ENCODE measurements at regions of chr16 and their contacts with region 1.

Region 1: DNA sequence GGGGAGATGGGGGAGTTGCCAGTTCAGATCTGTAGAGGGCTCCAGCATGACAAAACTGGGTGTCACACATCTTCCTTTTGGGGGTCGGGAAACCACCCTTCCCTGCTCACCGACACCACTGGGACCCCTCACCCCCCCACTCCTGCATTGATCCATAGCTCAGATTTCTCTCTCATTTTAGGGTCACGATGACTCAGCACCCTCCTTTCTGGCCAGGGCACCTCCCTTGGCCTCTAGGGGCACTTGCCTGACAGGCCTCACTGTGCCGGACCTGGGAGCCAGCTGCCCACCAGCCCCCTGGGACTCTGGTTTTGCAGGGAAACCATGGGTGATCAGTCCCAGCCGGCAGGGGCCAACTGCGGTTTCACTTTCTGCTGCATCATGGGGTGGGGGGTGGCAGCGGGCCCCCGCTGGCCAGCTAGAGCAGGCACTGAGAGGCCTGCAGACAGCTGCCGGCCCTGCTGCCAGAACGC is 239.4 kb downstream of the MRTFB start:
- DNase-seq: no peak
- ATAC-seq: no peak; the same call in 1 of the 2 replicates
- H3K4me3 ChIP-seq: peak overlapping the region in 1 of 2 experiments; percentile 37; a peak in 1 of 4 replicates
- H3K27ac ChIP-seq: peak overlapping the region; percentile 74
- H3K4me1 ChIP-seq: peaks cover 47 to 58% of the 10 kb centered on the region in 2 experiments
- H3K27me3 ChIP-seq: no peaks in the 10 kb centered on the region
- CTCF ChIP-seq: peak in 2 of 3 experiments; percentile 10 to 15; a peak in 1 of 6 replicates
- POLR2A ChIP-seq: no peak
- RAD21 ChIP-seq: no peak

Region 2: DNA sequence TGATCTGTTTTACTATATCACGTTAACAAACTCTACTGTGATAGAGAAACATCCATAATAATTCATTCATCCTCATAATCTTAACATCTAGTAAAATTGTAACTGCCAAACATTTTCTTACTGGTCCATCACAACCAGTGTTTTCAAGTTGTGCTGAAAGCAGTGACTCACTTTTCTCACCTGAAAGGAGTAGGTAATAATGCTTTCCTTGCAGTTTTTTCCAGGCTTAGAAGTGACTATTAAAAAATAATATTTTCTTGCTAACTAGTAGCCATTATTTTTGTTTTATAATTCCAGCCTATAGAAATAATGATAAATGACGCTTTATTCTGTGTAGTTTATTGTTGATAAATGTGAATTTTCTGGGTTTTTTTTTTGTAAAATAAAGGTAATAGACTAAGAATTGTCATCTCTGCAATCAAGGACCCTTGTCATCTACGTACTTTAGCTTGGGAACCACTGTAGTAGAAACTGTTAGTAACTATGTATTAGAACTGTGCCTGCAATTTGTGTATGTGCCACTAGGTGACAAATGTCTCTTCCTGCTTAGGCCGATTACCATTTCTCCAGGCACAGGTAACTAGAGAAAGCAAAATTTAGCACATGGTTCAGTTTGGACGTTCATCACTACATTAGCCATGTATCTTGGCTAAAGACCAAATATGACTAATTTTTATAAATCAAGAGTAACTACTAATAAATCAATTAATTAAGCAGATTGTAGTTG is 800.0 kb before region 1 on chr16:
- CTCF ChIA-PET with region 1: no interaction called
- POLR2A ChIA-PET with region 1: no interaction called
- RAD21 ChIA-PET with region 1: no interaction called
- intact Hi-C with region 1: no loop called
- DNase-seq: no peak
- ATAC-seq: no peak
- H3K4me3 ChIP-seq: no peak overlapping the region
- H3K27ac ChIP-seq: no peak overlapping the region
- H3K4me1 ChIP-seq: no peaks in the 10 kb centered on the region
- H3K27me3 ChIP-seq: no peaks in the 10 kb centered on the region
- CTCF ChIP-seq: peak in 2 of 3 experiments; percentile 33 to 47; a peak in 4 of 6 replicates
- POLR2A ChIP-seq: no peak
- RAD21 ChIP-seq: no peak

Region 3: GRCh38 chr16:14263011-14263410 is 47.5 kb before region 1 on chr16:
- CTCF ChIA-PET with region 1: no interaction called
- POLR2A ChIA-PET with region 1: no interaction called
- RAD21 ChIA-PET with region 1: no interaction called
- intact Hi-C with region 1: no loop called
- DNase-seq: no peak
- ATAC-seq: no peak
- H3K4me3 ChIP-seq: no peak overlapping the region
- H3K27ac ChIP-seq: no peak overlapping the region
- H3K4me1 ChIP-seq: no peaks in the 10 kb centered on the region
- H3K27me3 ChIP-seq: no peaks in the 10 kb centered on the region
- CTCF ChIP-seq: no peak
- POLR2A ChIP-seq: no peak
- RAD21 ChIP-seq: no peak

Region 4: GRCh38 chr16:14364386-14365204 is 54.0 kb after region 1 on chr16:
- CTCF ChIA-PET with region 1: no interaction called
- POLR2A ChIA-PET with region 1: no interaction called
- RAD21 ChIA-PET with region 1: no interaction called
- intact Hi-C with region 1: loop called (anchors 5 kb)
- DNase-seq: peak; percentile 46
- ATAC-seq: peak; percentile 71
- H3K4me3 ChIP-seq: peak overlapping the region; percentile 35 to 52
- H3K27ac ChIP-seq: peak overlapping the region; percentile 63
- H3K4me1 ChIP-seq: peaks cover 20 to 26% of the 10 kb centered on the region in 2 experiments
- H3K27me3 ChIP-seq: no peaks in the 10 kb centered on the region
- CTCF ChIP-seq: no peak
- POLR2A ChIP-seq: no peak
- RAD21 ChIP-seq: peak; percentile 61